ENCODE measurements at regions of chr11 and their contacts with region 1.

Region 1: DNA sequence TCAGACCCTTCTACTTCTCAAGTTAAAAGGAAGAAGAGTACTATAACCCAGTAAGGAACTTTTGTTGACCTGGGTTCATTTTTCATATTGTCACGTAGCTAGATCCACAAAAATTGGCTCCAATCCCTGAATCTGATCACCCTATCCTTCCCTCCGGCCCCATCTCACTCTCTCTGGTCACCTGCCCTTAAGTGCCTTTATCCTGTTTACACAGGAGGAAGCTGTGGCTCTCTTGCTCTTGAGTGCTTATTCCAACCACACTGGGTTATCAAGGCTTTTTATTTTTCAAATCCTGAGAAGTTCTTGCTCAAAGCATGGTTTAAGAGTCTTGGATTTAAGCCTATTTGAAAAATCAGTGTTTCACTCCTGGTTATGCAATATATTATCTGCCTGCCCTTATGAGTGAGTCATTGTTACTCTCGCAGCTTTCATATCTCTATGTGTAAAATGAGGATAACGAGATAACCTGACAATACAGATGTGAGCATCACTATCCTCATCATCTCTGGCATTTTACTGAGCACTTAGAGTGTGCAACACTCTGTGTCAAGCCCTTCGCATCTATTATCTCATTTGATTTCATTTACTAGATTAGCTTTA is 293.9 kb downstream of the GUCY1A2 start:
- DNase-seq: peak; percentile 45
- H3K4me3 Mint-ChIP-seq: no peak overlapping the region
- H3K27ac Mint-ChIP-seq: peak overlapping the region; percentile 53
- H3K4me1 Mint-ChIP-seq: peaks cover 7% of the 10 kb centered on the region
- H3K27me3 Mint-ChIP-seq: no peaks in the 10 kb centered on the region
- CTCF ChIP-seq: no peak

Region 2: GRCh38 chr11:106974831-106975230 is 250.4 kb after region 1 on chr11:
- CTCF ChIA-PET with region 1: no interaction called
- POLR2A ChIA-PET with region 1: no interaction called
- intact Hi-C with region 1: loop called (anchors 1 kb)
- DNase-seq: no peak
- H3K4me3 Mint-ChIP-seq: no peak overlapping the region
- H3K27ac Mint-ChIP-seq: no peak overlapping the region
- H3K4me1 Mint-ChIP-seq: no peaks in the 10 kb centered on the region
- H3K27me3 Mint-ChIP-seq: no peaks in the 10 kb centered on the region
- CTCF ChIP-seq: no peak

Region 3: GRCh38 chr11:107017433-107018227 is 293.2 kb after region 1 on chr11:
- CTCF ChIA-PET with region 1: interaction called, 4 read pairs
- POLR2A ChIA-PET with region 1: no interaction called
- intact Hi-C with region 1: loop called (anchors 1 kb)
- DNase-seq: peak; percentile 44
- H3K4me3 Mint-ChIP-seq: peak overlapping the region; percentile 59
- H3K27ac Mint-ChIP-seq: no peak overlapping the region
- H3K4me1 Mint-ChIP-seq: peaks cover 4% of the 10 kb centered on the region
- H3K27me3 Mint-ChIP-seq: peaks cover 55% of the 10 kb centered on the region
- CTCF ChIP-seq: peak; percentile 40

Region 4: DNA sequence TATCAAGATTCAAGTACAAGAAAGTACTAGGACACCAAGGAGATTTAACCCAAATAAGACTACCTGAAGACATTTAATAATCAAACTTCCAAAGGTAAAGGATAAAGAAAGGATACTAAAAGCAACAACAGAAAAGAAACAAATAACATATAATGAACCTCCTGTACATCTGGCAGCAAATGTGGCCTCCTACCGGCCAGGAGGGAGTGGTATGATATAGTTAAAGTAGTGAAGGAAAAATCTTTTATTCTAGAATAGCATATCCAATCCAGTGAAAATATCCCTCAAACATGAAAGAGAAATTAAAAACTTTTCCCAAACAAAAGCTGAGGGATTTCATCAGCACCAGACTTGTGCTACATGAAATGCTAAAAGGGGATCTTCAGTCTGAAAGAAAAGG is 398.6 kb after region 1 on chr11:
- CTCF ChIA-PET with region 1: no interaction called
- POLR2A ChIA-PET with region 1: no interaction called
- intact Hi-C with region 1: loop called (anchors 5 kb)
- DNase-seq: peak; percentile 7
- H3K4me3 Mint-ChIP-seq: no peak overlapping the region
- H3K27ac Mint-ChIP-seq: no peak overlapping the region
- H3K4me1 Mint-ChIP-seq: no peaks in the 10 kb centered on the region
- H3K27me3 Mint-ChIP-seq: no peaks in the 10 kb centered on the region
- CTCF ChIP-seq: peak; percentile 16

Region 5: DNA sequence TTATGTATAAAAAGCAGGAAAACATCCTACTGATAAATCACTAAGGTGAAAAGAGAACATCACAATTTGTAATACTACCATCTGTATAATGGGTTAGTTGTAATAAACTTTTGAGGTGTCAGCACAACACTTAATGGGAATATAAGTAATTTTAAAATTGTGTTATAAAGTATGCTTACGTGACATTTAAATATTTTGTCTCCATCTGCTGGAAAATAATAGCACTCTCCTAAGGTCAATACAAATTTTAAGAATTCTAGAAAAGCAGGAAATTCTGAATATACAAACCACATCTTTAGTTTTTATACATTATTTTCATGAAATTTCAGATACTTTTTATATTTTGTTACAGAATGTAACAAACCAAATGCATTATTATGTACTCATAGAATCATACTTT is 713.8 kb after region 1 on chr11:
- CTCF ChIA-PET with region 1: interaction called, 3 read pairs
- POLR2A ChIA-PET with region 1: no interaction called
- intact Hi-C with region 1: loop called (anchors 2 kb)
- DNase-seq: no peak
- H3K4me3 Mint-ChIP-seq: no peak overlapping the region
- H3K27ac Mint-ChIP-seq: no peak overlapping the region
- H3K4me1 Mint-ChIP-seq: no peaks in the 10 kb centered on the region
- H3K27me3 Mint-ChIP-seq: no peaks in the 10 kb centered on the region
- CTCF ChIP-seq: no peak